OCI-LY7 (cell line): ENCODE measurements at regions of chr3 and their contacts with region 1.

Region 1: GRCh38 chr3:121660356-121661171 is at the start of gene HCLS1:
- DNase-seq: peak; percentile 89
- H3K4me3 ChIP-seq: peak within 1 kb of the TSS; percentile 75
- H3K27ac ChIP-seq: peak within 1 kb of the TSS; percentile 82
- H3K4me1 ChIP-seq: peaks cover 28% of the 10 kb centered on the region
- CTCF ChIP-seq: 0 out of 2 replicates have a peak, but pooled peaks have one; percentile 29
- total RNA-seq, gene HCLS1: 124 and 167 TPM in 2 replicates

Region 2: DNA sequence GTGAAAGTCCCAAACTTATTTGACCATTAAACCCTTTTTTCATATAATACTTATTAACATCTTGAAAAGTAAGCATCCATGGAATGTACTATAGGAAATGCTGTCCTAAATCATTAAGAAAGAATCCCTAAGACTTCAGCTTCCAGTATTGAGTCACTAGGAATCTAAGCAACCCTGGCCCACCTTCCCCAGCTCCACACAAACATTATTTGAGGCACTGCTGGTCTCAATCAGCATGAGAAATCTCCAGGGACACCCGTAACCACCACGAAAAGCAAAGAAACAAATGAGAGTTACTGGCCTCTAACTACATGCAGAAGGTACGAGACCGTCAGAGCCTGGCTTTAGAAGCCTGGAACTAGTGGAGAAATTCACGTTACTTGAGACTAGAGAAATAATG is 183.0 kb before region 1 on chr3:
- CTCF ChIA-PET with region 1: no interaction called
- POLR2A ChIA-PET with region 1: no interaction called
- intact Hi-C with region 1: no loop called
- DNase-seq: no peak
- H3K4me3 ChIP-seq: no peak overlapping the region
- H3K27ac ChIP-seq: no peak overlapping the region
- H3K4me1 ChIP-seq: no peaks in the 10 kb centered on the region
- CTCF ChIP-seq: no peak

Region 3: GRCh38 chr3:121648219-121648958 is 12.2 kb before region 1 on chr3:
- CTCF ChIA-PET with region 1: no interaction called
- POLR2A ChIA-PET with region 1: interaction called, 12 read pairs
- intact Hi-C with region 1: no loop called
- DNase-seq: no peak
- H3K4me3 ChIP-seq: no peak overlapping the region
- H3K27ac ChIP-seq: no peak overlapping the region
- H3K4me1 ChIP-seq: no peaks in the 10 kb centered on the region
- CTCF ChIP-seq: no peak

Region 4: DNA sequence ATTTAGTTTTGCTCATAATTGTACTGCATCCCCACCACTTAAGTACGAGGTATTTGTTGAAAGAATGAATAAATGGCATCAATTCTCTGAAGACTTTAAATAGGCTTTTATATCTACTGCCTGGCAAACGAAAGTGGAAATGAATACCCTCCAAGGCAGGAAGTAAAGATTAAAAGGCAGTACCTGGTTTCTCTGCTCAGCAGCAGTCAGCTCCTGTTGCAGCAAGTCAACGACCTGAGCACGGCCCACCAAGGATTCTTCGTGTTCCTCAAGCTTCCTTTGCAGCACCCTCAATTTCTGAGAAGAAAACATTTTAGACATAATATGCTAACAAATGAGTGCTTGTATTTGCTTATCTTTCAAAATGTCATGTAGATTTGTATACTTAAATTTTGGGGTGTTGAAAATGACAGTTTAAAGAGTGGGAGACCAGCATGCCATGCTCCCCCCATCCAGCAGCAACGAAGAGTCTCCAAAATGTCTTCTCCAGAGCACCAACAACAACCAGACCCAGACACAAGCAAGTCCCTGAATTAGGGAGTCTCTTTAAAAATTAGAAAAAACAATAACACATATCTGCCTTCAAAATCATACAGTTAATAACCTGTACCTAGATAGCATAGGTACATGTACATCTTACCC is 57.8 kb after region 1 on chr3:
- CTCF ChIA-PET with region 1: no interaction called
- POLR2A ChIA-PET with region 1: interaction called, 10 read pairs
- intact Hi-C with region 1: no loop called
- DNase-seq: no peak
- H3K4me3 ChIP-seq: no peak overlapping the region
- H3K27ac ChIP-seq: no peak overlapping the region
- H3K4me1 ChIP-seq: peaks cover 4% of the 10 kb centered on the region
- CTCF ChIP-seq: no peak

Region 5: GRCh38 chr3:121855555-121855954 is 195.0 kb after region 1 on chr3:
- CTCF ChIA-PET with region 1: no interaction called
- POLR2A ChIA-PET with region 1: no interaction called
- intact Hi-C with region 1: loop called (anchors 5 kb)
- DNase-seq: peak; percentile 56
- H3K4me3 ChIP-seq: no peak overlapping the region
- H3K27ac ChIP-seq: no peak overlapping the region
- H3K4me1 ChIP-seq: no peaks in the 10 kb centered on the region
- CTCF ChIP-seq: peak; percentile 88